Vagina (tissue), 2 donors: ENCODE measurements at regions of chr15 and their contacts with region 1.

Region 1: GRCh38 chr15:89358755-89359439 is 24.3 kb upstream of the POLG start:
- DNase-seq: no peak
- H3K4me3 ChIP-seq: peak overlapping the region; percentile 32 to 37
- H3K27ac ChIP-seq: no peak overlapping the region
- H3K4me1 ChIP-seq: peaks cover 19% of the 10 kb centered on the region
- H3K27me3 ChIP-seq: peaks cover 15% of the 10 kb centered on the region
- CTCF ChIP-seq: peak; percentile 89 to 100 (median 91)
- POLR2A ChIP-seq: no peak

Region 2: GRCh38 chr15:89429023-89429422 is 70.1 kb after region 1 on chr15:
- intact Hi-C with region 1: loop called (anchors 5 kb)
- DNase-seq: no peak
- H3K4me3 ChIP-seq: no peak overlapping the region
- H3K27ac ChIP-seq: no peak overlapping the region
- H3K4me1 ChIP-seq: peaks cover 11% of the 10 kb centered on the region
- H3K27me3 ChIP-seq: no peaks in the 10 kb centered on the region
- CTCF ChIP-seq: no peak
- POLR2A ChIP-seq: no peak

Region 3: DNA sequence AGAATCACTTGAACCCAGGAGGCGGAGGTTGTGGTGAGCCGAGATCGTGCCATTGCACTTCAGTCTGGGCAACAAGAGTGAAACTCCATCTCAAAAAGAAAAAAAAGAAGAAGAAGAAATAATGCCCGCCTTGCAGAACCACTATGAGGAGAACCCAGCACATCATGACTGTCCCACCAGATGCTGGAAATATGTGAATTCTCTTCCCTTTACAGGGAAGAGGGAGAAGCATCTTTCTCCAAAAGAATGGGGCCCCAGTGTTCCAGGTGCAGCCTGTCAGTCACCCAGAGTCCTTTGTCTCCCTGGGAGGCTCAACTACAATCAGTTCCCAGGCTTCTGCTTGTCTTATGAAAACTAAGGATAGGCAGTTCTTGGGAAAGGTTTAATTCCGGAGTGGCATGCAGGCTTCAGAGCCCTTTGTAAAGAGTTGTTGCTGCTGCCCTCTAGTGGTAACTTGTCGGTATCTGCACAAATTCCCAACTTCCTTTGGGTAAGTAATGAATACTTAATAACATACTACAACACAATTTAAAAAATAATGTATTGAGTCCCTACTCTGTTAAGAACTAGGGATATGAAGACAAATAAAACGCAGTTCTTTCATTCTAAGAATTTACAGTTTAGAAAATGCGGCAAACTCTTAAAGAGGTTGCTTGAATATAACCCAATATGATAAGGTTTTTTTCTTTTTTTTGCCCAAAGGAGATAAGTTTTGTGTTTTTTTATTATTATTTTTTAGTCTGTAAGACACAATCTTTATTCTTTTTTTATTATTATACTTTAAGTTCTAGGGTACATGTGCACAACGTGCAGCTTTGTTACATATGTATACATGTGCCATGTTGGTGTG is 197.7 kb after region 1 on chr15:
- intact Hi-C with region 1: loop called (anchors 10 kb)
- DNase-seq: peak in 1 of 2 donors; percentile 42
- H3K4me3 ChIP-seq: no peak overlapping the region
- H3K27ac ChIP-seq: no peak overlapping the region
- H3K4me1 ChIP-seq: no peaks in the 10 kb centered on the region
- H3K27me3 ChIP-seq: no peaks in the 10 kb centered on the region
- CTCF ChIP-seq: peak; percentile 28 to 50 (median 33)
- POLR2A ChIP-seq: no peak